GM10248 (cell line): ENCODE measurements at regions of chr9 and their contacts with region 1.

Region 1: GRCh38 chr9:136849038-136849959 is at the start of gene PHPT1:
- DNase-seq: peak; percentile 99
- CTCF ChIP-seq: no peak

Region 2: DNA sequence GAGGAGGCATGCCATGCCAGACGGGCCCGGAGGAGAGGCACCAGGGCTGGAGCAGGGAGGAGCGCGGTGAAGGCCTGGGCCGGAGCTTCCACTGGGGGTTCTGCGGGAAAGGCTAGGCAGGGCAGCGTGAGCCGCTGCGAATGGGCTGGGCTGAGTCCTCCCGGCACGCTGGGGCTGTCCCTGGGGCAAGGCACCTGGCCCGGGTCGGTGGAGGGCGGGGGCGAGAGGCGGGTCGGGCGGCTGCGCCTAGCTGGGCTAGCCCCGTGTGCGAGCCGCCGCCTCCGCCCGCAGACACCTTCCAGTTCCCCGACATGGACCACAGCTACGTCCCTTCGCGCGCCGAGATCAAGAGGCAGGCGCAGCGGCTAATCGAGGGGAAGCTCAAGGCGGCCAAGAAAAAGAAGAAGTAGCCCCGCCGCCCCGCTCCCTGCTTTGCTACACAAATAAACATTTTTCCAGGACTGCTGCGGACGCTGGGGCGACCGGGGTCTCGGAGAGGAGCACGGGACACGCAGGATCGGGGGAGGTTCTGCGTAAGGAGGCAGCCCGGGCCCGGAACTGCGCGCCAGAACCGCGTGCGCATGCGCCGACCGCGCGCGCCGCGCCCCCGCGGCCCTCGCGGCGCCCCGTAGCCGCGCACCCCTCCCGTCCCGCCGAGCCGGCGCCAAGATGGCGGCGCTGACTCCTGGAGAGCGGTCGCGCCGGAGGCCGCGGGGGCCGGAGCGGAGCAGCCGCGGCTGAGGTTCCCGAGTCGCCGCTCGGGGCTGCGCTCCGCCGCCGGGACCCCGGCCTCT is 41.8 kb before region 1 on chr9 and contains the start of gene RABL6:
- CTCF ChIA-PET with region 1: interaction called, 77 read pairs
- POLR2A ChIA-PET with region 1: no interaction called
- DNase-seq: peak; percentile 97
- CTCF ChIP-seq: no peak

Region 3: GRCh38 chr9:136944519-136945279 is 95.4 kb after region 1 on chr9 and contains the starts of genes C8G and FBXW5:
- CTCF ChIA-PET with region 1: interaction called, 14 read pairs
- POLR2A ChIA-PET with region 1: interaction called, 4 read pairs
- DNase-seq: peak; percentile 100
- CTCF ChIP-seq: peak; percentile 95

Region 4: DNA sequence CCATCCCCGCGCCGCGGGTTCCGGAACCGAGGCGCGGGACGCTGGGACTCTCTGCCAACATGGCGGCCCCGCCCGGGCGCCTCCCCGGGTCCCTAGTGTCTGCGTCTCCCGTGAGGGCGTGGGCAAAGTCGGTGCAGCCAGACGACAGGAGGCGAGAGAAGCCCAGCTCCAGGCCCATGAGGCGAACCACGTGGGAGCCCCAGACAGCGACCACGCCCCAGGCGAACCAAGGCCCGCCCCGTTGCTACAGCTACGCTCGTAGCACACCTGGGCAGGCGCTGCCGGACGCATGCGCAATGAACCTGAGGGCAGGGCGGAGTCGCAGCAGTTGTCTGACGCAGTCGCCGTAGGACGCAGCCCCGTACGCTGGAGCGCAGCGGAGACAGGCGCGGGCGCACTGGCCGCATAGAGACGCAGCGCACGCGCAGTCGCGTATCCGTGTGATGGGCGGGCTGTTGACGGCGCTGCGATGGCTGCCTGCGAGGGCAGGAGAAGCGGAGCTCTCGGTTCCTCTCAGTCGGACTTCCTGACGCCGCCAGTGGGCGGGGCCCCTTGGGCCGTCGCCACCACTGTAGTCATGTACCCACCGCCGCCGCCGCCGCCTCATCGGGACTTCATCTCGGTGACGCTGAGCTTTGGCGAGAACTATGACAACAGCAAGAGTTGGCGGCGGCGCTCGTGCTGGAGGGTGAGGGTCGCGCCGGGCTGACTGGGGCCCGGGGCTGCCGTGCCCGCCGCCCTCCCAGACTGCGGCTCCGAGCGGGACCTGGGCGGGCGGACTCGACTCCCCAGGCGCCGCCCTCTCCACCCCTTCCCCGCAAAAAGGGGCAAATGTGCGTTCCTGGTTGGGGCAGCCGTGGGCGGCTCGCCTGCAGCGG is 237.5 kb after region 1 on chr9 and contains the start of gene MAN1B1:
- CTCF ChIA-PET with region 1: no interaction called
- POLR2A ChIA-PET with region 1: no interaction called
- DNase-seq: peak; percentile 98
- CTCF ChIP-seq: no peak